ENCODE measurements at regions of chr17 and their contacts with region 1.

Region 1: DNA sequence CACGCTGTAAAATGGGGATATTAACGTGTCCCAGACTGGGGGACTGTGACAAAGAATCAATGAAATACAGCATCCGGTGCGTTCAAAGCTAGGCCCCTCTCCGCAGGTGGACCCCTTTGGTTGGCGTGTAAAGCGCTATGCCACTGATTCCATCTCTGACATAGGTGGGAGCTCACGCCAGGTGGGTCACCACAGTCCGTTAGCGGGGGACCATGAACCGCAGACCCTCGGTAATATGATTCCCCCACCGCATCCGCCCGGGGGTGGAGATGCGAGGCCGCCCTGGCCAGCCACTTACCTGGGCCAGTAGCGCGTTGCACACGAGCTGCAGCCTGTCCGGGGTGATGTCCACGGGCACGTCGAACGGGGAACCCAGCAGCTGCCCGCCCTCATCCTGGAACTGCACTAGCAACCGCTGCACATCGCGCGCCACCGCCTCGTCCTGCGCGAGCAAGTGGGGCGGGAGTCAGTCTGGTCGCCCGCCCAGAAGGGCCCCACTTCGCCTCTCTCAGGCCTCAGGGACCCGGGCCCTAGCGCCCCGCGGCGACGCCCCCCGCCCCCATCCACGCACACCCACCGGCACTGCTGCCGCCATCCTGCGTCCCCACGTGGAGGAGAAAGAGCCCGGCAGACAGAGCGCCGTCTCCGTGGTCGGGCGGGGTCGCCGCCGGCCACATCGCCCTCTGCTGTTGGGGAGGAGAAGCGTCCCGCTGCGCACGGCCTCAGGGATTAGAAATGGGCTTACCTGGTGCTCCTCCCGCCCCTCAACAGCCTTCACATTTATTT is at the start of gene NLE1:
- DNase-seq: peak; percentile 61 to 90
- H3K4me3 ChIP-seq: peak within 1 kb of the TSS; percentile 96
- H3K4me1 ChIP-seq: no peaks in the 10 kb centered on the region
- H3K27me3 ChIP-seq: no peaks in the 10 kb centered on the region

Region 2: DNA sequence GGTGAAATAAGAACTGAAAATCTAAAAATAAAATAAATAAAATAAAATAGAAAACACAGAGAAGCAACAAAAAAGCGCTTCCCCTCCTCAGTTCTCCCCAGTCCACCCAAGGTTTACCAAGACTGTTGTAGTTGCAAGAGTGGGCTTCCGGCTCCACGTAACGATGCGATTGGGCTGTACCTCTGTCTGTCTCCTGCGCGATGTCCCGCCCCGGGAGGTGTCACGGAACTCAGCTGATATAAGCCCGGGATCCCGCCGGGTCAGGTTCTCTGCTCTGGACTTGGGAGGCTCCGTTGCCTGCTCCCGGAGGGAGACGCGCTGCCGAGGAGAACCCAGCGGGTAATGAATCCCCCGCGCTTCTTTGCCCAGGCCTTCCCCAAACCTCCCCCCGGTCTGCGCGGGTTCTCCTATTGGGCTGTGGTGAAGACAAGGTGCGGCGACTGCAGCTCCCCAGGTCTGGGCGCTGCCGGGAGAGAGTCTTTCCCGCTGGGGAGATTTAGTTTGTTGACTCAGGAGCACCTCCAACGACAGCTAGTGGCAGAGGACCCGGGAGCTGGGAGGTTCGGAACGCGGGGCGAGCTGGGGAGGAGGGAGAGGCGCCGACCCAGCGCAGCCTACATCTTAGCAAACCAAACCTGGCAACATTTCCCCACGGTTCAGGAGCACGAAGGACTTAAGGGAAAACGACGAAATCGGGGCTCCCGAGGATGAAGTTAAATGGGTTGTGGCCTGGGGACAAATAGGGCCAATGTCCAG is 101.1 kb after region 1 on chr17 and contains the start of gene SLFN5:
- in situ Hi-C with region 1: loop called (anchors 5 kb)
- DNase-seq: peak; percentile 71 to 93
- H3K4me3 ChIP-seq: peak within 1 kb of the TSS; percentile 52
- H3K4me1 ChIP-seq: peaks cover 13% of the 10 kb centered on the region
- H3K27me3 ChIP-seq: no peaks in the 10 kb centered on the region

Measured in HAP-1 (cell line).